ENCODE measurements at regions of chr17 and their contacts with region 1.

Region 1: DNA sequence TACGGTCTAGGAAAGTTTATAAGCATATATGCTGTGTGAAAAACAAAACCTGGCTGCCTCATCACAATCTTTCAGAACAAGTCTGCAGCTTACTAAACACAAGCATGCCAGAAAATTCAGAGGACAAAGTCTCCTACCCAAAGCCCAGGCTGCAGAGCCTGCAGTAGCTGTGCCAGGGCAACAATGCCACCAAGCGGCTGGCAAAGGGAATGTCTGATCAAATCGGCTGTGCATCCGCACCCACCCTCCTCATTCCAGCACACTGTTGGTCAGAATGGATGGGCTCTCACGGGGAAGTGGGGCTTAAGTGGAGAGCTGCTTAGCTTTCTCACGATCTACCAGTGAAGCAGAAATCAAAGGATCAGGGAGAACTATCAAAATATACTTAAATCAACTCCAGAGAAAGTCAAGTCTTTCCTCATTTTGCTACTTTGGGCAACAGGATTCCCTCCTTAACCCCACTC is 73.5 kb downstream of the CYTH1 start:
- DNase-seq: peak; percentile 82
- ATAC-seq: peak; percentile 77
- H3K4me3 Mint-ChIP-seq: peak overlapping the region; percentile 49
- H3K27ac Mint-ChIP-seq: peak overlapping the region; percentile 86
- H3K4me1 Mint-ChIP-seq: peaks cover 67% of the 10 kb centered on the region
- H3K27me3 Mint-ChIP-seq: no peaks in the 10 kb centered on the region

Region 2: DNA sequence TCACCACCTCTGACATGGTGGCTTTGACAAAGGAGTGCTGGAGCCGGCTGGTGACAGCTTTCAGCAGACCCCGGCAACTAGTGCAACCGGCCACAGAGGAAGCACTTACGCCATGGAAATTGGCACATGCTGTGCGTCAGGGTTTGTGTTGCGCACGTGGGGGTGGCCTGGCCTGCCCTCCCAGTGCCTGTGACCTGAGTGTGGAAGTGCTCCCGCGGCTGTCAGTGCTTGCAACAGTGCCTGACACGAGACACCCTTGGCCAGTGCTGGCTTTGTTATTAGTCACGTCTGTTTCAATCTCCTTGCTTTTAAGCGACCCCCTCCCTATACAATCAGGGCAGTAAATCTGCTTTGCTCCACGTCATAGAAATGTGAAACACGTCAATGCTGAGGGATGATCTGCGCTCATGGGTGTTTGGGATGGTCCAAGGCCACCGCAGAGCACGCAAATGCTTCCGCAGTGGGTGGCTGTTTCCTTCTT is 265.9 kb before region 1 on chr17:
- CTCF ChIA-PET with region 1: no interaction called
- POLR2A ChIA-PET with region 1: no interaction called
- intact Hi-C with region 1: loop called (anchors 1 to 2 kb)
- DNase-seq: no peak
- ATAC-seq: no peak
- H3K4me3 Mint-ChIP-seq: no peak overlapping the region
- H3K27ac Mint-ChIP-seq: no peak overlapping the region
- H3K4me1 Mint-ChIP-seq: no peaks in the 10 kb centered on the region
- H3K27me3 Mint-ChIP-seq: no peaks in the 10 kb centered on the region

Region 3: DNA sequence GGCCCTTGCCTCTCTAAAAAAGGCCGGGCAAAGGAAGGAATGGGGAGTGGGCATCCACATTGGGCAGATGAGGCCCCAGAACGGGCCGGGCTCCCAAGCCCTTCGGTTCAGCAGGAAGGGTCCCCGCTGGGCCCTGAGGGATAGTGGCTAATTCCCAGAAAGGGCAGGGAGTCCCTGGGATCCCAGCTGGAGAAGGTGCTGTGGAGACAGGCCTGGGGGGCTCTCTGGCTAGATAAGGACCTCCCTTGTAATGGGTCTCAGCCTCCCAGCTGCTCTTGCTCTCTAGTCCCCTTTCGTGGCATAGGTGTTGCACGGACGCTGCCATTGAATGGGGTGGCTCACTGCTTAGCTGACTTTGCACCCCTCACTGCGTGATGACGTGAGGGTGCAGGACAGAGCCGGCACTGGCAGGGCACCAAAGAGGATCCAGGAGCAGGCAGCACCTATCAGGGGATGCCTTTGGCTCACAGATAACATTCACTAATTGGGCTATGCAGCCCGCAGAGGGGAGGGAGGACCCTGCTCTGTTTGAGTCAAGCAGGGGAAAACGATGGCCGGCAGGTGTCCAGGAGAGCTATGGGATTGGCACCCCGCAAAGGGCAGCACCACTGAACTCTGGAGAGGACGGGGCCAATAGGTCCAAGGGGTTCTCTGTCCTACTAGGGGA is 241.4 kb before region 1 on chr17:
- CTCF ChIA-PET with region 1: no interaction called
- POLR2A ChIA-PET with region 1: no interaction called
- intact Hi-C with region 1: no loop called
- DNase-seq: no peak
- ATAC-seq: no peak
- H3K4me3 Mint-ChIP-seq: no peak overlapping the region
- H3K27ac Mint-ChIP-seq: no peak overlapping the region
- H3K4me1 Mint-ChIP-seq: no peaks in the 10 kb centered on the region
- H3K27me3 Mint-ChIP-seq: no peaks in the 10 kb centered on the region

Region 4: DNA sequence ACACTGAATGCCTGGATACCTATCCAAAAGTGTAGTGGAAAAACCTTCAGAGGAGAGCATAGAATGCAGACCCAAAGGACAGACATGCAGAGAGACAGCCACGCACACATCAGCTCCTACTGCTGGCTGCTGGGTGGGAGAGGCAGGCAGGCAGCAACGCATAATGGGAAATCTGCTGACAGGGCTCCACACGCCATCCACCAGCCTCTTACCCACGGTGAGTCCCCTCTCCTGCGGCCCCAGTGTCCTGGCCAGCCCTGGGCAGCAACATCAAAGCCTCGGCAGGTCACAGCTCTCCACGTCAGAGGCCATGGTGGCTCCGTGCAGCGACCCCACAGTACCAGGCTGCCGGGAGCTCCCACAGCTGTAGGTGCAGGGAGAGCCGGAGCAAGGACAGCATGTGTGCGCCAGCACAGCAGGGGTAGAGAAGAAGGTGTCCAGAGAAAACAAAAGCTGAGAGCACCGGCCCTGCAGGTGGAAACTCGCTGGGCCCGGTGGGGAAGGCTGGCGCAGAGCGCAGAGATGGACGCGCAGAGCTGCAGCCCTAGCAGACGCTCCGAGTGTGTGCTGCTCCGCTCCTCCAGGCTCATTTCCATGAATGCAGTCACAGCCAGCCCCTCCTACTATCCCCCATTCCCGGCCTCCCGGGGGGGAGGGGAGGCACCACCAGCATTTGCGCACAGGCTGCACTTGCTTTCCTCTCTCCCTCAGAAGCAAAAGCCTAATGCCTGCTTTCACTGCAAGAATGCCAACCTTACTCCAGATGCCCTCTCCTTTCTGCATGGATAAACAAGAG is 14.7 kb after region 1 on chr17:
- CTCF ChIA-PET with region 1: interaction called, 39 read pairs
- POLR2A ChIA-PET with region 1: interaction called, 5 read pairs
- intact Hi-C with region 1: loop called (anchors 1 kb)
- DNase-seq: no peak
- ATAC-seq: no peak
- H3K4me3 Mint-ChIP-seq: no peak overlapping the region
- H3K27ac Mint-ChIP-seq: peak overlapping the region; percentile 83
- H3K4me1 Mint-ChIP-seq: peaks cover 94% of the 10 kb centered on the region
- H3K27me3 Mint-ChIP-seq: no peaks in the 10 kb centered on the region